Vagina (tissue), 2 donors: ENCODE measurements at regions of chr18 and their contacts with region 1.

Region 1: GRCh38 chr18:77210249-77210648 is 39.4 kb upstream of the GALR1 start:
- DNase-seq: no peak
- H3K4me3 ChIP-seq: no peak overlapping the region
- H3K27ac ChIP-seq: peak overlapping the region; percentile 28
- H3K4me1 ChIP-seq: peaks cover 35% of the 10 kb centered on the region
- H3K27me3 ChIP-seq: no peaks in the 10 kb centered on the region
- CTCF ChIP-seq: no peak
- POLR2A ChIP-seq: no peak

Region 2: DNA sequence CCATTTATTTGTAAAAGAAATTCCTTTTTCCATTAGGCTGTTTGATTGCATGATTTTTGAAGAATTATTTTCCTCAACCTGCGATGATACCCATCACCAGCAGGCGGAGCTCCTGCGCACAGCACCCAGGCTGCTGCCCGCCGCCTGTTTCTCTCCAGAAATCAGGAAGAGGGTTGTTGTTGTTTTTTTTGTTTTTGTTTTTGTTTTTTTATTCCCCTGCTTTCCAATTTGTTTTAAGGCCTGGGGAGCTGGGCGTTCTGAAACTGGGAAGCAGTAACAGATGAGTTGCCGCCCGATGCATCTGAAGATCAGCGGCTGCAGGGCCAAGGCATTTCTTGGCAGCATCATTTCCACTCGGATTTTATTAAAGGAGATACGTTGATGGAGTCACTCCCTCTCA is 209.7 kb before region 1 on chr18:
- intact Hi-C with region 1: loop called (anchors 10 kb)
- DNase-seq: no peak
- H3K4me3 ChIP-seq: peak overlapping the region; percentile 17 to 23
- H3K27ac ChIP-seq: peak overlapping the region; percentile 47
- H3K4me1 ChIP-seq: no peaks in the 10 kb centered on the region
- H3K27me3 ChIP-seq: no peaks in the 10 kb centered on the region
- CTCF ChIP-seq: peak; percentile 84 to 95 (median 89)
- POLR2A ChIP-seq: no peak

Region 3: DNA sequence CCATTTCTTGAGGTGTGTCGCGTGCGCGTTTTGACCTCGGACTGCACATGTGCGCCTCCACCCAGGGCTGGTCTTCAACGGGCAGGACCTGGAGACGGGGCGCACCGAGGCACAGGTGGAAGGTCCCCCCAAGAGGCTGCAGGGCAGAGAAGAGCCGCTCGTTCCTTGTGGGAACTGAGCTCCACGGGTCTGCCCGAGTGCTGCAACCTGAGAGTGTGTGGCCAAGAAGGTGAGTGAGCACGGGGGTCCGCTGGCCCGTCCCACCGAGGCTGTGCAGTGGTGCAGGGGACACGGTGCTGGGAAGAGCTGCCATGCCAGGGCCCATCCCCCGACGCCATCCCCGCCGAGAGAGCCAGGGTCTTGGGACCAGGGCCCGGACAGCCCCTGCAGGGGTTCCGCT is 307.7 kb after region 1 on chr18:
- intact Hi-C with region 1: no loop called
- DNase-seq: no peak
- H3K4me3 ChIP-seq: no peak overlapping the region
- H3K27ac ChIP-seq: no peak overlapping the region
- H3K4me1 ChIP-seq: no peaks in the 10 kb centered on the region
- H3K27me3 ChIP-seq: no peaks in the 10 kb centered on the region
- CTCF ChIP-seq: no peak
- POLR2A ChIP-seq: no peak